ENCODE measurements at regions of chr11 and their contacts with region 1.

Region 1: DNA sequence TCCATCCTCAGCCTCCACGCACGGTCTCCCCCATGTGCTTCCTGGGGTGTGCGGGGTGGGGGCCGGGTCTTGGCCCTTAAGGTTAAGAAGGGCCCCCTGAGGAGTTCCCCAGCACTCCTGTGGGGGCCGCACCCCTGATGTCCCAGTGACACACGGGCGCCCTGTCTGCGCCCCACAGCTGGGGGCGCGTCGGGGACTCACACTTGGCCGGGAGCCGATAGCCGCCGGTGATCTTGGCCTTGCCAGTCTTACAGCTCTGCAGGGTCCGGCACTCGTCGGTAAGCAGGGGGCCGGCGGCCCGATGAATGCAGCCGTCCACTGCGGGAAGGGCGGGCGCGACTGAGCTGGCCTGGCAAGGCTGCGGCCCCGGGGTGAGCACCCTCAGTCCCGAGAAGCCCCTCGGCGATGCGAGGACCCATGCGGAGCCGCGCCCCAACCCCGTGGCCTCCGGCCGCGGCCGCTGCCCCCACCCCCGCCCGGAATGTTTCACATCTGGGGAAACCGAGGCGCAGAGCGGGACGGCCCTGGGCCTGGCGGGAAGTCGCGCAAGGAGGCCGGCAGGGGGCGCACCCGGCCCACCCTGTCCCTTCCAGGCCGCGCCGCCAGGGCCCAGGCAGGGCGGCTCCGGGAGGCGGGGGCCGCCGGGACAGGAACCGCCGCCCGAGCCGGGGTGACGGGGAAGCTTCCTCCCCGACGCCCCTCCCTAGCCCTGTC is 13.9 kb downstream of the OTUB1 start:
- DNase-seq: peak; percentile 79
- H3K4me3 Mint-ChIP-seq: no peak overlapping the region
- H3K27ac Mint-ChIP-seq: no peak overlapping the region
- H3K4me1 Mint-ChIP-seq: peaks cover 5% of the 10 kb centered on the region
- H3K27me3 Mint-ChIP-seq: peaks cover 40% of the 10 kb centered on the region

Region 2: GRCh38 chr11:63248987-63249386 is 751.2 kb before region 1 on chr11:
- CTCF ChIA-PET with region 1: no interaction called
- DNase-seq: no peak
- H3K4me3 Mint-ChIP-seq: no peak overlapping the region
- H3K27ac Mint-ChIP-seq: no peak overlapping the region
- H3K4me1 Mint-ChIP-seq: no peaks in the 10 kb centered on the region
- H3K27me3 Mint-ChIP-seq: peaks cover 9% of the 10 kb centered on the region

Region 3: GRCh38 chr11:63986932-63987513 is 13.2 kb before region 1 on chr11:
- CTCF ChIA-PET with region 1: interaction called, 10 read pairs
- DNase-seq: no peak
- H3K4me3 Mint-ChIP-seq: peak overlapping the region; percentile 72
- H3K27ac Mint-ChIP-seq: peak overlapping the region; percentile 49
- H3K4me1 Mint-ChIP-seq: peaks cover 43% of the 10 kb centered on the region
- H3K27me3 Mint-ChIP-seq: no peaks in the 10 kb centered on the region

Region 4: DNA sequence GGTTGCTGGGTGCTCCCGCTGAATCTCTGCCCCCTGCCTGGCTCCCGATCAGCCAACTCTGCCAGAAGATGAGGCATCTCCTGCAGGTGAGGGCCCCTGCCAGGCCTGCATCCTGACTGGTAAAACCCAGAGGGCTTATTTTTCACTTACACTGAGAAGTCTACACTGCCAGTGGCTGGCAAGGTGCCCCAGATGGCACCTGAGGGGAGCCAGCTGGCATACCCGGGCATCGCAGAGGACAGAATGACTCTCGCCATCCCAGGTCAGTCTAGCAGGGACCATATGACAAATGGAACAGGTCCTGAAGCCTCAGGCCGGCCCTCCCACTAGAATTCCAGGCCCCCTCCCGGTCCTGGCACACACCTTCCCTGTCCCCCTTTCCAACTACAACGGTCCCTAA is 134.8 kb after region 1 on chr11:
- CTCF ChIA-PET with region 1: interaction called, 10 read pairs
- DNase-seq: no peak
- H3K4me3 Mint-ChIP-seq: no peak overlapping the region
- H3K27ac Mint-ChIP-seq: no peak overlapping the region
- H3K4me1 Mint-ChIP-seq: no peaks in the 10 kb centered on the region
- H3K27me3 Mint-ChIP-seq: no peaks in the 10 kb centered on the region

Region 5: GRCh38 chr11:64152841-64153691 is 152.9 kb after region 1 on chr11:
- CTCF ChIA-PET with region 1: interaction called, 111 read pairs
- DNase-seq: peak; percentile 76
- H3K4me3 Mint-ChIP-seq: no peak overlapping the region
- H3K27ac Mint-ChIP-seq: no peak overlapping the region
- H3K4me1 Mint-ChIP-seq: peaks cover 6% of the 10 kb centered on the region
- H3K27me3 Mint-ChIP-seq: peaks cover 11% of the 10 kb centered on the region